Activated naive CD4-positive, alpha-beta T cell treated with anti-CD3 and anti-CD28 coated beads for 36 hours (primary cell): ENCODE measurements at regions of chrX and their contacts with region 1.

Region 1: GRCh38 chrX:46573331-46573891 is at the start of gene CHST7:
- DNase-seq: peak; percentile 46
- H3K4me3 Mint-ChIP-seq: peak within 1 kb of the TSS; percentile 69
- H3K27ac Mint-ChIP-seq: peak within 1 kb of the TSS; percentile 89
- H3K4me1 Mint-ChIP-seq: peaks cover 39% of the 10 kb centered on the region
- H3K27me3 Mint-ChIP-seq: peaks cover 2% of the 10 kb centered on the region
- total RNA-seq, gene CHST7: 0.79 to 0.99 TPM

Region 2: DNA sequence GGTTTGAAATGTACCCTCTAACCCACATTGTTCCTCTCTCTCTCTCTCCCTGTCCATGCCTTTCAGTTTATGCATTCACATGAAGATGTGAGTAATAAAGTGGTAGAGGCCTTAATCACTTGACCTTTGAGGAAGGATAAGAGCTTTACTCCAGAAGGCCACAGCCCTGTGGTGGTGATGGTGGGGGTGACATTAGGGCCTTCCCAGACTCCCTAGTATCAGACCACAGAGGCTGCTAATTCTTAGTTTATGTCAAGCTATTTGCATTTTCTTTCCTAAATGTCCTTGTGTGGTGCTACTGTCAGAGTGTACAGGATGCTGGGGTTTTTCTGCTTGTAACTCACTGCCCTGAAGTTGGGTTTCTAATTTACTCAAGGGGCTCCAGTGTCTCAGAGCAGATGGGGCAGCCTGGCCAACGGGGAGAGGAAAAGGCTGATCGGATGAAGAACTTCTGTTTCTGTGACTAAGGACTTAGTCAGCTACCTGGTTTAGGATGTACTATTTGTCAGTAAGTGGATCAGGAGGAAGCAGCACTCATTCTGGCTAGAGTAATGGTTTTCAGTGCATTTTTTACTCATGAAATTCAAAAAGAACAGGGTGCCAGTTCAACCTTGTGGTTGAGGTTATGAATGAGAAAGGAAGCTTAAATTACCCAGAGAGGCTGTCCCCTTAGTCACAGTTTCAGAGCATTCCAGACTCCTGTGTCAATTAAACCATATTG is 863.2 kb before region 1 on chrX:
- CTCF ChIA-PET with region 1: no interaction called
- intact Hi-C with region 1: loop called (anchors 5 kb)
- DNase-seq: peak; percentile 71
- H3K4me3 Mint-ChIP-seq: no peak overlapping the region
- H3K27ac Mint-ChIP-seq: peak overlapping the region; percentile 69
- H3K4me1 Mint-ChIP-seq: peaks cover 42% of the 10 kb centered on the region
- H3K27me3 Mint-ChIP-seq: no peaks in the 10 kb centered on the region

Region 3: GRCh38 chrX:46628460-46629371 is 55.3 kb after region 1 on chrX:
- CTCF ChIA-PET with region 1: no interaction called
- intact Hi-C with region 1: loop called (anchors 1 kb)
- DNase-seq: peak; percentile 6
- H3K4me3 Mint-ChIP-seq: no peak overlapping the region
- H3K27ac Mint-ChIP-seq: no peak overlapping the region
- H3K4me1 Mint-ChIP-seq: peaks cover 24% of the 10 kb centered on the region
- H3K27me3 Mint-ChIP-seq: no peaks in the 10 kb centered on the region

Region 4: GRCh38 chrX:46642145-46642544 is 68.7 kb after region 1 on chrX:
- CTCF ChIA-PET with region 1: interaction called, 3 read pairs
- intact Hi-C with region 1: loop called (anchors 1 kb)
- DNase-seq: peak; percentile 6
- H3K4me3 Mint-ChIP-seq: no peak overlapping the region
- H3K27ac Mint-ChIP-seq: no peak overlapping the region
- H3K4me1 Mint-ChIP-seq: peaks cover 9% of the 10 kb centered on the region
- H3K27me3 Mint-ChIP-seq: no peaks in the 10 kb centered on the region

Region 5: DNA sequence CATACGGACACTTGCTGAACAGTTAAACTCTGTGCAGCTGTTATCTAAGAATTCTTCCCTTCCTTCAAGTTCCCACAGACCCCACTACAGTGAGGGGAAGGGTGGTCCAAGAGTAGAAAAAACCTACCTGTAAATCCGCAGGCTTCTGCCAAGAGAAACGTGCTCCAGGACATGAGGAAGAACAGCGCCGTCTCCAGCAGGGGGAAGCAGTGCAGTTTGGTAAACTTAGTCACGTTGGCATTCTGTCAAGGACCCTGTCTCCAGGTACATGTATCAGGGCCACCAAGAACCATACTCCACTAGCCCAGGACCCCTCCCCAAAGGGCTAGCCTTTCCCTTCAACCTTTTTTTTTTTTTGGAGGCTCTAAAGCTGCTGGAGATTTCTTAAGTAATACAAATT is 80.1 kb after region 1 on chrX:
- CTCF ChIA-PET with region 1: no interaction called
- intact Hi-C with region 1: no loop called
- DNase-seq: peak; percentile 30
- H3K4me3 Mint-ChIP-seq: no peak overlapping the region
- H3K27ac Mint-ChIP-seq: no peak overlapping the region
- H3K4me1 Mint-ChIP-seq: peaks cover 4% of the 10 kb centered on the region
- H3K27me3 Mint-ChIP-seq: no peaks in the 10 kb centered on the region

Region 6: GRCh38 chrX:46693149-46693548 is 119.7 kb after region 1 on chrX:
- CTCF ChIA-PET with region 1: no interaction called
- intact Hi-C with region 1: no loop called
- DNase-seq: no peak
- H3K4me3 Mint-ChIP-seq: no peak overlapping the region
- H3K27ac Mint-ChIP-seq: no peak overlapping the region
- H3K4me1 Mint-ChIP-seq: peaks cover 1% of the 10 kb centered on the region
- H3K27me3 Mint-ChIP-seq: no peaks in the 10 kb centered on the region

Region 7: GRCh38 chrX:46796574-46797191 is 223.3 kb after region 1 on chrX:
- CTCF ChIA-PET with region 1: no interaction called
- intact Hi-C with region 1: loop called (anchors 2 kb)
- DNase-seq: peak; percentile 86
- H3K4me3 Mint-ChIP-seq: no peak overlapping the region
- H3K27ac Mint-ChIP-seq: no peak overlapping the region
- H3K4me1 Mint-ChIP-seq: peaks cover 18% of the 10 kb centered on the region
- H3K27me3 Mint-ChIP-seq: no peaks in the 10 kb centered on the region